ENCODE measurements at regions of chr3 and their contacts with region 1.

Region 1: DNA sequence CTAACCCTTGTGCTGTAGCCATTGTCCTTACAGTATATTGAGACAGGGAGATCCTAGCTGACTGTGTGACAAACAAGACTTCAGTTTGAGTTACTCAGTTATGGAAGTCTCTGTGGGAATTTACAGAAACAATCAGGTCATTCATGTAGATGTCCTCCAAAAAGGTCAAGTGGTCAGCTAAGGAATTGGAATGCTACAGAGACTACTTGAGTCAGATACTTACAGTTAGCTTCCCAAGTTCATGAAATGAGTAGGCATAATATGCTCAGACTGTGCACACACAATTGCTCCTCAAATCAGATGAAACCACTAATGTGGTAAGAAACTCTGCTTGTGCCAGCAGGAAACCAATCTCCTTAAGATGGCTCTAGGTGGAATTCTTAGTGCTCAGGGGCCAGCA is 985.7 kb downstream of the NSUN3 start:
- DNase-seq: no peak
- H3K27ac ChIP-seq: no peak overlapping the region
- CTCF ChIP-seq: no peak

Region 2: GRCh38 chr3:95217661-95218060 is 169.1 kb after region 1 on chr3:
- CTCF ChIA-PET with region 1: no interaction called
- POLR2A ChIA-PET with region 1: interaction called, 10 read pairs
- DNase-seq: no peak
- H3K27ac ChIP-seq: no peak overlapping the region
- CTCF ChIP-seq: no peak

Region 3: GRCh38 chr3:95235916-95236315 is 187.4 kb after region 1 on chr3:
- CTCF ChIA-PET with region 1: no interaction called
- POLR2A ChIA-PET with region 1: no interaction called
- DNase-seq: no peak
- H3K27ac ChIP-seq: no peak overlapping the region
- CTCF ChIP-seq: no peak

Region 4: DNA sequence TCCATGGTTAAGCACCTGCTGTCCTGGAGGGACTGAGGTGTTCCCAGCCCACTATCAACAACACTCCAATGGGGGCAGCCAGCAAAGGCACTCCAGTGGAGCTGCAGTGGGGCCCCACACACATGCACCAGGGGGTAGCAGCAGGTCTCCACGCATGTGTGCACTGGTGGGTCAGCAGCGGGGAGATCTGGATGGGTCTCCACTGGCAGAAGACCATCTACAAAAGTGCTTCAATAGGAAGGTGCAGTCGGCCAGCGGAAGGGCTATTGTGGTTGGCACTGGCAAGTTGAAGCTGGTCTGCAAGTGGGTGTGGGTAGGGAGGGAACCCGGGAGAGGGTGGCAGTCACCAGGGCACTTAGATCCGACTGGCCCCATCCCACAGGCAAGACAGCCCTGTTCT is 369.7 kb after region 1 on chr3:
- CTCF ChIA-PET with region 1: interaction called, 10 read pairs
- POLR2A ChIA-PET with region 1: no interaction called
- DNase-seq: no peak
- H3K27ac ChIP-seq: no peak overlapping the region
- CTCF ChIP-seq: no peak